ENCODE measurements at regions of chr19 and their contacts with region 1.

Region 1: GRCh38 chr19:1113033-1113985 is 9.5 kb downstream of the GPX4 start:
- DNase-seq: peak; percentile 69
- H3K4me3 ChIP-seq: peak overlapping the region in 1 of 4 donors; percentile 22
- H3K27ac ChIP-seq: peak overlapping the region; percentile 73 to 91 (median 84)
- H3K4me1 ChIP-seq: peaks cover 30 to 71% (median 32%) of the 10 kb centered on the region in 3 donors
- H3K27me3 ChIP-seq: no peaks in the 10 kb centered on the region
- CTCF ChIP-seq: peak; percentile 83 to 92 (median 87)
- POLR2A ChIP-seq: peak in 1 of 4 donors; percentile 11

Region 2: GRCh38 chr19:1168877-1169791 is 55.8 kb after region 1 on chr19:
- intact Hi-C with region 1: loop called (anchors 10 kb)
- DNase-seq: no peak
- H3K4me3 ChIP-seq: peak overlapping the region; percentile 38 to 87 (median 41)
- H3K27ac ChIP-seq: peak overlapping the region; percentile 89 to 100 (median 96)
- H3K4me1 ChIP-seq: peaks cover 61 to 89% (median 66%) of the 10 kb centered on the region in 3 donors
- H3K27me3 ChIP-seq: no peaks in the 10 kb centered on the region
- CTCF ChIP-seq: no peak
- POLR2A ChIP-seq: peak in 1 of 4 donors; percentile 44

Region 3: DNA sequence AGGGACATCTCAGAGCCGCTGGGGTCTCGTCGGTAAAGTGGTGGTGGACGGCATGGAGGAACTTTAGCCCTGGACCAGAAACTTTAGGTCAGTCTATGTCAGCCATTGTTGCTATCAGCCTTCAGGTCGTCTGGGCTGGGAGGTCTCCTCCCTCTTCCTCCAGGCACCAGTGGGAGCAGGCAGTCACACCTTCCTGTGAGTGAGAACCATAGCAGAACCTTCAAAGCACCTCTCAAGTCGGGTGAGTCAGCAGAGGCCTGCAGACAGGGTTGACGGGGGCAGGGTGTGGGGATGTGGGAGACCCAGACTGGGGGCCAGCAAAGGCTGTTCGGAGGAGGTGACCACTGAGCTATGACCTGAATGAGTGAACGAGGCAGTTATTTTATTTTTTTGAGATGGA is 76.1 kb after region 1 on chr19:
- intact Hi-C with region 1: loop called (anchors 5 kb)
- DNase-seq: no peak
- H3K4me3 ChIP-seq: no peak overlapping the region
- H3K27ac ChIP-seq: peak overlapping the region in 1 of 4 donors; percentile 21
- H3K4me1 ChIP-seq: peaks cover 0 to 32% (median 3%) of the 10 kb centered on the region in 3 donors
- H3K27me3 ChIP-seq: no peaks in the 10 kb centered on the region
- CTCF ChIP-seq: no peak
- POLR2A ChIP-seq: no peak

Measured in esophagus squamous epithelium (tissue), 5 donors.